Activated CD8-positive, alpha-beta T cell treated with anti-CD3 and anti-CD28 coated beads for 36 hours (primary cell): ENCODE measurements at regions of chr7 and their contacts with region 1.

Region 1: GRCh38 chr7:140003913-140004382 is 58.8 kb downstream of the PARP12 start:
- DNase-seq: peak; percentile 44
- ATAC-seq: no peak
- H3K4me3 Mint-ChIP-seq: no peak overlapping the region
- H3K27ac Mint-ChIP-seq: no peak overlapping the region
- H3K4me1 Mint-ChIP-seq: no peaks in the 10 kb centered on the region
- H3K27me3 Mint-ChIP-seq: no peaks in the 10 kb centered on the region
- CTCF ChIP-seq: peak; percentile 59

Region 2: DNA sequence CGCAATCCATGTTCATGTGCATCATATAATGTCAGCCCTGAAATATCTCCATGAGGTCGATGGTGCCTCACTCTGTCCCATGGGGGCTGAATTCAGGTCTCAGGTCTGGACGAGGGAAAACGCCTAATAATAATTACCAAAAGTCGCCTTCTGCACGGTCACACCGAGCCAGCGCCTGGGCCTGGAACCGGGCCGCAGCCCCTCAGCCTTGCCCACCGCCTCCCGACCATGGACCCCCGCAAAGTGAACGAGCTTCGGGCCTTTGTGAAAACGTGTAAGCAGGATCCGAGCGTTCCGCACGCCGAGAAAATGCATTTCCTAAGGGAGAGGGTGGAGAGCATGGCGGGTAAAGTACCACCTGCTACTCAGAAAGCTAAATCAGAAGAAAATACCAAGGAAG is 501.7 kb before region 1 on chr7:
- CTCF ChIA-PET with region 1: interaction called, 16 read pairs
- POLR2A ChIA-PET with region 1: no interaction called
- intact Hi-C with region 1: loop called (anchors 5 kb)
- DNase-seq: no peak
- ATAC-seq: no peak
- H3K4me3 Mint-ChIP-seq: no peak overlapping the region
- H3K27ac Mint-ChIP-seq: no peak overlapping the region
- H3K4me1 Mint-ChIP-seq: peaks cover 2% of the 10 kb centered on the region
- H3K27me3 Mint-ChIP-seq: peaks cover 2% of the 10 kb centered on the region
- CTCF ChIP-seq: no peak

Region 3: DNA sequence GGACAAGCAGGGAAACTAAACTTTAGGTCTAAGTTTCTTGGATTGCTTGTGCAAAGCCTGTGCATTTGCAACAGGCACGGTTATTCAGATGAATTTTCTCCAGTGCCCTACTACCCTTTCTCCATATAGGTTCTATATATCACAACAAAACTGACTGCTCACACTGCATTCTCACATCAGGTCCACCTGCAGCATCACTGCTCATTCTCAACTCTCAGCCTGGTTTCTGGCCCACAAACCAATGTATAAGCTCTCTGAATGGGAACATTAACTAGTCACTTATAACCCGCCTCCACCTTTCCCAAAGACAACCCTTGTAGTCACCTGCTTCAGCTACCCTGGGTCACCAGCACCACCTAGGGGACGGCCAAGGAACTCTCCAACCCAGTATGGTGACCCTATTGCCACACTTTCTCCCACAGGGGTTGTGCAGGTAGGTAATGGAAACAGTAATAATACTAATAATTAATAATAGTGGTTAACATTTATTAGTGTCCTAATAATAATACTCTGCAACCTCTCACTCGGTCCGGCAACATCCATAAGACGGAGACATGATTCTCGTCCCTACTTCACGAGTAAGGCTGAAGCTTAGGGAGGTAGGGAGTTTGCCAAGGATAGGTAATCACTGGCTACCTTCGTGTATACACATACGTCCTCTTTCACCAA is 383.1 kb before region 1 on chr7:
- CTCF ChIA-PET with region 1: interaction called, 84 read pairs
- POLR2A ChIA-PET with region 1: no interaction called
- intact Hi-C with region 1: no loop called
- DNase-seq: peak; percentile 72
- ATAC-seq: peak; percentile 90
- H3K4me3 Mint-ChIP-seq: no peak overlapping the region
- H3K27ac Mint-ChIP-seq: no peak overlapping the region
- H3K4me1 Mint-ChIP-seq: peaks cover 17% of the 10 kb centered on the region
- H3K27me3 Mint-ChIP-seq: no peaks in the 10 kb centered on the region
- CTCF ChIP-seq: peak; percentile 77

Region 4: GRCh38 chr7:139777948-139778841 is 225.8 kb before region 1 on chr7 and contains the start of gene HIPK2:
- CTCF ChIA-PET with region 1: interaction called, 3 read pairs
- POLR2A ChIA-PET with region 1: no interaction called
- intact Hi-C with region 1: loop called (anchors 5 kb)
- DNase-seq: peak; percentile 71
- ATAC-seq: peak; percentile 55
- H3K4me3 Mint-ChIP-seq: peak within 1 kb of the TSS; percentile 96
- H3K27ac Mint-ChIP-seq: peak within 1 kb of the TSS; percentile 96
- H3K4me1 Mint-ChIP-seq: peaks cover 35% of the 10 kb centered on the region
- H3K27me3 Mint-ChIP-seq: peaks cover 20% of the 10 kb centered on the region
- CTCF ChIP-seq: no peak
- total RNA-seq, gene HIPK2: 17.3 to 17.6 TPM

Region 5: DNA sequence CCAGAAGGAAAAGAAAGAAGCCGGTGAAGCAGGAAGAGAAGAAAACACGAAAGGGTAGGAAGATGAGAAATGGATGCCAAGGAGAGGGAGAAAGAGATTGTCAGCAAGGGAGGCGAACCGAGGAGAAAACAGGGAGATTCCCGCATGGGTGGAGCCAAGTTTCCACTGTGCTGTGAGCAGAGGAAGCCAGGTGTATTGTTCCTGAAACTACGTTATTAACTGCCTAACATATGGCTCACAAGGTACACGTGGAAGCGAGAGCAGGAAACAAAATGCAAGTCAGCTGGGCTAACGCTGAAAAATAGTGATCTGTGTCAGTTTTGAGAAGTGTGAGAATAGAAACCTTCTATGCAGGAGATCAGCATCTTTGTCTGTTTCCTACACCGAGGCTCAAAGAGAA is 205.7 kb before region 1 on chr7:
- CTCF ChIA-PET with region 1: no interaction called
- POLR2A ChIA-PET with region 1: no interaction called
- intact Hi-C with region 1: no loop called
- DNase-seq: no peak
- ATAC-seq: no peak
- H3K4me3 Mint-ChIP-seq: no peak overlapping the region
- H3K27ac Mint-ChIP-seq: no peak overlapping the region
- H3K4me1 Mint-ChIP-seq: peaks cover 7% of the 10 kb centered on the region
- H3K27me3 Mint-ChIP-seq: no peaks in the 10 kb centered on the region
- CTCF ChIP-seq: no peak

Region 6: DNA sequence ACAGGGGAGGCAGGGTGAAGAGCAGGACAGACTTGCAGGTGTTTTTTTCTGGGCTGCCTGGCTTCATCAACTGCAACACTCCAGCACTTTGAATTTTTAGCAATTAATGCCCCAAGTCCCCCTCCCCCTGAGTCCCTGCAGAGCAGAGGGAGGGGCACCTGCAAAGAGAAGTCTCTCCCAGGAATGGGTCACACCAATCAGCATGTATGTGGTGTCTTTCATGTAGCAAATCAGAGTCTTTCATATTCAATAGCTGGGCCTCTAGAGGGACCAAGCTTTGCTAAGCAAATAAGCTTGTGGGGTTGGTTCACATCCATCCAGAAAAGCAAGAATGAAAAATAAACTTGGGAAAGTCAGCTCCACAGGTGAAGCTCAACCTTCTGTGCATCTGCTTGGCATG is 31.9 kb before region 1 on chr7:
- CTCF ChIA-PET with region 1: no interaction called
- POLR2A ChIA-PET with region 1: no interaction called
- intact Hi-C with region 1: no loop called
- DNase-seq: no peak
- ATAC-seq: no peak
- H3K4me3 Mint-ChIP-seq: no peak overlapping the region
- H3K27ac Mint-ChIP-seq: no peak overlapping the region
- H3K4me1 Mint-ChIP-seq: peaks cover 1% of the 10 kb centered on the region
- H3K27me3 Mint-ChIP-seq: no peaks in the 10 kb centered on the region
- CTCF ChIP-seq: no peak

Region 7: GRCh38 chr7:140017543-140017942 is 13.6 kb after region 1 on chr7:
- CTCF ChIA-PET with region 1: interaction called, 12 read pairs
- POLR2A ChIA-PET with region 1: no interaction called
- intact Hi-C with region 1: no loop called
- DNase-seq: no peak
- ATAC-seq: no peak
- H3K4me3 Mint-ChIP-seq: no peak overlapping the region
- H3K27ac Mint-ChIP-seq: no peak overlapping the region
- H3K4me1 Mint-ChIP-seq: no peaks in the 10 kb centered on the region
- H3K27me3 Mint-ChIP-seq: no peaks in the 10 kb centered on the region
- CTCF ChIP-seq: no peak

Region 8: DNA sequence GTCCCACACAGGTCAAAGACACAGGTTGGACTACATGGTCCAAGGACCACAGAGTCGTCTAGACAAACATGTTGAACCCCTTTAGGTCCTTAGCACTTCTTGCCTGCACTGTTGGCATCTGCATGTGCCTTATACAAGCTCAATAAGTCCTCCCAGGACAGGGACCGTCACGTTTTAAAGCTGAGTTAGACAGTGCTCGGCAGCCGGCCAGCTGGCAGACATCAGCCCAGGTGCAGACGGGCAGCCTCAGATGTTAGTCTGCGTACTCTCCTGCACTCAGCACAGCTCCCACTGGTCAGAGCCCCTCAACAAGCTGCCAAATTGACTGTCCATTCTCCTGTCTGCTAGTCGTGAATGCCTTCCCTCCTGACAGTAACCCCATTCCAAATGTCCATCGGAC is 23.9 kb after region 1 on chr7:
- CTCF ChIA-PET with region 1: no interaction called
- POLR2A ChIA-PET with region 1: no interaction called
- intact Hi-C with region 1: no loop called
- DNase-seq: no peak
- ATAC-seq: no peak
- H3K4me3 Mint-ChIP-seq: no peak overlapping the region
- H3K27ac Mint-ChIP-seq: no peak overlapping the region
- H3K4me1 Mint-ChIP-seq: peaks cover 3% of the 10 kb centered on the region
- H3K27me3 Mint-ChIP-seq: no peaks in the 10 kb centered on the region
- CTCF ChIP-seq: no peak